ENCODE measurements at regions of chr12 and their contacts with region 1.

Region 1: GRCh38 chr12:108701779-108702441 is 29.4 kb downstream of the CORO1C start:
- DNase-seq: no peak
- ATAC-seq: peak; percentile 70
- H3K4me3 ChIP-seq: no peak overlapping the region
- H3K27ac ChIP-seq: peak overlapping the region; percentile 11; the same call in 1 of the 2 replicates
- H3K4me1 ChIP-seq: peaks cover 20% of the 10 kb centered on the region
- H3K27me3 ChIP-seq: no peaks in the 10 kb centered on the region
- CTCF ChIP-seq: no peak
- EP300 ChIP-seq: no peak
- POLR2A ChIP-seq: no peak
- RAD21 ChIP-seq: no peak

Region 2: DNA sequence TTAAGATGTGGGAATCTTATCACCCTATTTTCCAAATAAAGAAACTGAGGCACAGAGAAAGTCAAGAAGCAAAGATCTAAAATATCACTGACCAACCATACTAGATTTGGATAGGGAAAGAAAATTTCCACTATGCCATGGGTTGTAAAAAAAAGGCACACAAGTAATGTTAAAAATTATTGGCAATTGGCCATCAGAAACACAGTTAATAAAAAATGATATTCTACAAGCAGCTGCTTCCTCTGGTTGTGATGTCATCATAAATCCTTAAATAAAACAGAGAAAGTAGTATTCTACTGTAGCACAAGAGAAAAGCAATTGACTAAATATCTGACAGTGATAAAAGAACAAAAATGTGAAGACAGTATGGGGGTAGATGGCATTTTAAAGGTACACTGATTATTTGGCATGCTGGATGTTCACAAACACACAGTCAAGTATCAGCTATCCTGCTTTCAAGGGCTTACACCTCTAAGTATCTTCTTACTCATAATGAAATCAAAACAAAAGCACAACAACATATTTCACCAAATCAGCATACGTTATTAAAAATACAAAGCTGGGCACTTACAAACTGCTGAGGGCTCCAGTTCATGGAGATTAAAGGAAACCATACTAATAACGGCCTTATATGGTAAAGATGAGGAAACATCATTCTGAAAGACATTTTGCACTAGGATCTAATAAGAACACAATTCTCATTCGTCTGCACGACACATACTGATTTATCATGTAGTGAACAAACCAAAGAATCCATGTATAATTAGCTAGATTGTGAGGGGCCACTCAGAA is 16.2 kb before region 1 on chr12:
- CTCF ChIA-PET with region 1: interaction called, 15 read pairs
- POLR2A ChIA-PET with region 1: interaction called, 4 read pairs
- RAD21 ChIA-PET with region 1: interaction called, 10 read pairs
- SMC1A ChIA-PET with region 1: interaction called, 29 read pairs
- in situ Hi-C with region 1: no loop called
- intact Hi-C with region 1: no loop called
- DNase-seq: no peak
- ATAC-seq: peak; percentile 43
- H3K4me3 ChIP-seq: no peak overlapping the region
- H3K27ac ChIP-seq: peak overlapping the region; percentile 57
- H3K4me1 ChIP-seq: peaks cover 42% of the 10 kb centered on the region
- H3K27me3 ChIP-seq: no peaks in the 10 kb centered on the region
- CTCF ChIP-seq: no peak
- EP300 ChIP-seq: no peak
- POLR2A ChIP-seq: no peak
- RAD21 ChIP-seq: no peak

Region 3: DNA sequence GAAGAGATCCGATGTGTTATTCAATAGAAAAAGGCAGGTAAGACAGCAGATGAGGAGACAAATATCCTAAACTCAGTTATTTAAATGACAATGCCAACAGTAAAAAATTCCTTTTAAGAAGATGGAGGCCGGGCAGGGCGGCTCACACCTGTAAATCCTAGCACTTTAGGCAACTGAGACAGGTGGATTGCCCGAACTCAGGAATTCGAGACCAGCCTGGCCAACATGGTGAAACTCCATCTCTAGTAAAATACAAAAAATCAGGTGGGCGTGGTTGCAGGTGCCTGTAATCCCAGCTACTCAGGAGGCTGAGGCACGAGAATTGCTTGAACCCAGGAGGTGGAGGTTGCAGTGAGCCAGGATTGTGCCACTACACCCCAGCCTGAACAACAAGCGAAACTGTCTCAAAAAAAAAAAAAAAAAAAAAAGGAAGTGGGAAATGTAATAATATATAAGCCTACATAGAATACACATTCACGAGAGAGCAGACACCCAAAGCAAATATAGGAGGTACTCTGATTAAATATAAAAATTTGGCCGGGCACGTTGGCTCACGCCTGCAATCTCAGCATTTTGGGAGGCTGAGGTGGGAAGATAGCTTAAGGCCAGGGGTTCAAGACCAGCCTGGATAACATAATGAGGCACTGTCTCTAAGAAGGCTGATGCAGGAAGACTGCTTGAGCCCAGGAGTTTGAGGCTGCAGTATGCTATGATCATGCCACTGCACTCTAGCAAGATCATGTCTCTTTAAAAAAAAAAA is 10.4 kb after region 1 on chr12:
- CTCF ChIA-PET with region 1: interaction called, 7 read pairs
- POLR2A ChIA-PET with region 1: interaction called, 6 read pairs
- RAD21 ChIA-PET with region 1: interaction called, 11 read pairs
- SMC1A ChIA-PET with region 1: interaction called, 83 read pairs
- in situ Hi-C with region 1: no loop called
- intact Hi-C with region 1: no loop called
- DNase-seq: no peak
- ATAC-seq: peak; percentile 80
- H3K4me3 ChIP-seq: no peak overlapping the region
- H3K27ac ChIP-seq: peak overlapping the region; percentile 20; the same call in 1 of the 2 replicates
- H3K4me1 ChIP-seq: peaks cover 36% of the 10 kb centered on the region
- H3K27me3 ChIP-seq: no peaks in the 10 kb centered on the region
- CTCF ChIP-seq: no peak
- EP300 ChIP-seq: no peak
- POLR2A ChIP-seq: no peak
- RAD21 ChIP-seq: no peak

Region 4: GRCh38 chr12:108722992-108723766 is 21.3 kb after region 1 on chr12:
- CTCF ChIA-PET with region 1: interaction called, 4 read pairs
- POLR2A ChIA-PET with region 1: interaction called, 10 read pairs
- RAD21 ChIA-PET with region 1: interaction called, 12 read pairs
- SMC1A ChIA-PET with region 1: interaction called, 83 read pairs
- in situ Hi-C with region 1: no loop called
- intact Hi-C with region 1: no loop called
- DNase-seq: no peak
- ATAC-seq: peak; percentile 52
- H3K4me3 ChIP-seq: no peak overlapping the region
- H3K27ac ChIP-seq: no peak overlapping the region
- H3K4me1 ChIP-seq: peaks cover 11% of the 10 kb centered on the region
- H3K27me3 ChIP-seq: no peaks in the 10 kb centered on the region
- CTCF ChIP-seq: no peak
- EP300 ChIP-seq: no peak
- POLR2A ChIP-seq: no peak
- RAD21 ChIP-seq: no peak

Region 5: DNA sequence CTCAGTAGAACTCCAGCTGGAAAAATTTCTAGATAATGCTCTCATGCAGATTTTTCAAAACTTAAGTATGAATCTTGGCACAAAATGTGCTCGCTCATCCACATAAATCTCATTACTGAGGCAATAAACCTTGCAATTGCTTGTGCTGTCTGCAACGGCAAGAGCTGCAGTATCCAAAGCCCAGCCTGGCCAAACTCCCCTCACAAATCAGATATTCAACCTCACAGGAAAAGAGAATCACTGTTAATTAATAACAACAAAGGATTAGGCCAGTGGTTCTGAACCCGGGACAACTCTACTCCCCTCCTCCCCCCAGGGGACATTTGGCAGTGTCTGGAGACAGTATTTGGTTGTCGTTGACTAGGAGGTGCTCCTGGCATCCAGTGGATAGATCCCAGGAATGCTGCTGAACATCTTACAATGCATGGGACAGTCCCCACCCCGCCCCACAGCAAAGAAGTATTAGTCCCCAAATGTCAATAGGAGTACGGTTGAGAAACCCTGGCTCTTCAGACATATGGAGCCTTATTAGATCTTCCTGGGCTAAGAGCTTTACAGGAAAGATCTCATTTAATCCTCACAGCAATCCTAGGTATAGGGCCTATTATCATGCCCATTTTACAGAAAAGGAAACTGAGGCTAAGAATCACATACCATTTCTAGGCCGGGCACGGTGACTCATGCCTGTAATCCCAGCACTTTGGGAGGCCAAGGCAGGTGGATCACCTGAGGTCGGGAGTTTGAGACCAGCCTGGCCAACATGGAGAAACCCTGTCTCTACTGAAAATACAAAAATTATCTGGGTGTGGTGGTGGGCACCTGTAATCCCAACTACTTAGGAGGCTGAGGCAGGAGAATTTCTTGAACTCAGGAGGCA is 48.9 kb after region 1 on chr12:
- CTCF ChIA-PET with region 1: no interaction called
- POLR2A ChIA-PET with region 1: no interaction called
- RAD21 ChIA-PET with region 1: no interaction called
- SMC1A ChIA-PET with region 1: no interaction called
- in situ Hi-C with region 1: no loop called
- intact Hi-C with region 1: no loop called
- DNase-seq: no peak
- ATAC-seq: no peak
- H3K4me3 ChIP-seq: no peak overlapping the region
- H3K27ac ChIP-seq: no peak overlapping the region
- H3K4me1 ChIP-seq: no peaks in the 10 kb centered on the region
- H3K27me3 ChIP-seq: no peaks in the 10 kb centered on the region
- CTCF ChIP-seq: no peak
- EP300 ChIP-seq: no peak
- POLR2A ChIP-seq: no peak
- RAD21 ChIP-seq: no peak

Measured in GM12878 (cell line).